ENCODE measurements at regions of chr10 and their contacts with region 1.

Region 1: DNA sequence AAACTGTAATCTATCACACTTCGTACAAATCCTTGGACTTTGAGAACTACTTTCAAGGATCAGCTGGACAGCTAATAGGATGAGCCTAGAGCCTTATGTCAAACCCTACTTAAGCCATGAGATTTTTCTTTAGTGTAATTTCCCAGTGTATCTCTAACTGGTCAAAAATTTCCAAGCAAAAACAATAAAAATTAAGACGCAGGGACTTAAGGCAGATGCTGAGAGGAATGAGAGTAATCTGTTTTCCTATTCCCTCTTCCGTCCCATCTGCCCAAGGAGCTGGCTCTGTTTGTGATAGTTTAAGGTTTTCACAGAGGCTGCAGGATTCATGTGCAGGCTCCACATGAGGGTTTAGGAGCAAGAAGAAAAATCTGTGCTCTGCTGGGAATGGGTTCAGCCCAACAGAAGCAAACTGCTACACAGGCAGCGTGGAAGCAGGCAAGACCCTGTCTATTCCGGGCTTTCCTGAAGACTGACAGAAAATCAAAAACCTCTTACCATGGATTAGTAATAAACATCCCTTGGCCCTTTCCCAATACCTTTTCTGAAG is 62.2 kb downstream of the ARMH3 start:
- DNase-seq: no peak
- H3K4me3 ChIP-seq: no peak overlapping the region
- H3K27ac ChIP-seq: no peak overlapping the region
- H3K4me1 ChIP-seq: no peaks in the 10 kb centered on the region
- H3K27me3 ChIP-seq: no peaks in the 10 kb centered on the region
- CTCF ChIP-seq: no peak
- POLR2A ChIP-seq: no peak

Region 2: GRCh38 chr10:101932183-101932582 is 61.5 kb before region 1 on chr10:
- intact Hi-C with region 1: loop called (anchors 2 kb)
- DNase-seq: no peak
- H3K4me3 ChIP-seq: no peak overlapping the region
- H3K27ac ChIP-seq: no peak overlapping the region
- H3K4me1 ChIP-seq: no peaks in the 10 kb centered on the region
- H3K27me3 ChIP-seq: no peaks in the 10 kb centered on the region
- CTCF ChIP-seq: no peak
- POLR2A ChIP-seq: no peak

Region 3: GRCh38 chr10:102120142-102120990 is 126.6 kb after region 1 on chr10 and contains the start of gene LDB1:
- intact Hi-C with region 1: no loop called
- DNase-seq: peak; percentile 70 to 76
- H3K4me3 ChIP-seq: peak within 1 kb of the TSS; percentile 80 to 96 (median 87)
- H3K27ac ChIP-seq: peak within 1 kb of the TSS; percentile 98 to 100
- H3K4me1 ChIP-seq: peaks cover 19 to 37% of the 10 kb centered on the region in 2 donors
- H3K27me3 ChIP-seq: no peaks in the 10 kb centered on the region
- CTCF ChIP-seq: no peak
- POLR2A ChIP-seq: peak; percentile 92
- total RNA-seq, gene LDB1: 29.6 to 53.6 (median 43.6) TPM

Region 4: DNA sequence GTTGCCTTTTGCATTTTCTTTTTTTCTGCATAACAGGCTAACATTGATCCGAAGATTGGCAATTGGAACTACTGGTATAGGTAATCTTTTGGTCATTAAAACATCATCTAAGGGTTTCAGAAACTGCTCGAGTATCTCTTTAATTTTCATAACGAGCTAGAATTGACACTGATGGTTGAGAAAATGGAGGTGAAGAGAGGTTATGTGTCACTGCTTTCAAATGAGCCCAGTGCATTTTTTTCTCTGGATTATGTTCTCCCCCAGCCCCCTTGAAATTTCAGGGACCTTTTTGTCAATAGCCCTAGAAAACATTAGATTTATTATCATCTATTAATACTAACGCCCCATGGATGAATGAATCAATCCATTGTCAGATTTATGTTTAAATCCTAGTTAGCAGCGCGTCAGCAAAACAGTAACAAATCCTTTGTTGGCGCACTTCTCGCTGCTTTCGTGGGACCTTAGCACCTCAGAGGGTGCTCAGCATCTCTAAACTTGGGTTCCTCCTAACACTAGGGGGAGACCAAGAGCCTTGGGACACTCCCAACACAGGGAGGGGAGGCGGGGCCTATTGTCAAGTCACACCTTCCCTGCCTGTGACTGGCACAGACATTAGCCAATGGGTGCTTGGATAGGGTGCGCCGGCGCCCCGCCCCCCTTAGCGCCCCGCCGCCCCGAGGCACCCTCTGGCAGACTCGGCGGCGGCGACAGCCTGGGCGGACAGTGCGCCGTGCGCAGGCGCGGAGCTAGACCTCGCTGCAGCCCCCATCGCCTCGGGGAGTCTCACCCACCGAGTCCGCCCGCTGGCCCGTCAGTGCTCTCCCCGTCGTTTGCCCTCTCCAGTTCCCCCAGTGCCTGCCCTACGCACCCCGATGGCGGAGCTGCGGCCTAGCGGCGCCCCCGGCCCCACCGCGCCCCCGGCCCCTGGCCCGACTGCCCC is 509.8 kb after region 1 on chr10 and contains the start of gene SUFU:
- intact Hi-C with region 1: no loop called
- DNase-seq: peak; percentile 96 to 98
- H3K4me3 ChIP-seq: peak within 1 kb of the TSS; percentile 98
- H3K27ac ChIP-seq: peak within 1 kb of the TSS; percentile 82 to 90
- H3K4me1 ChIP-seq: peaks cover 3 to 18% of the 10 kb centered on the region in 2 donors
- H3K27me3 ChIP-seq: no peaks in the 10 kb centered on the region
- CTCF ChIP-seq: peak; percentile 85 to 88 (median 87)
- POLR2A ChIP-seq: no peak
- total RNA-seq, gene SUFU: 6.2 to 9.1 (median 8.6) TPM

Region 5: GRCh38 chr10:102704915-102705314 is 711.2 kb after region 1 on chr10:
- intact Hi-C with region 1: loop called (anchors 5 kb)
- DNase-seq: no peak
- H3K4me3 ChIP-seq: no peak overlapping the region
- H3K27ac ChIP-seq: no peak overlapping the region
- H3K4me1 ChIP-seq: no peaks in the 10 kb centered on the region
- H3K27me3 ChIP-seq: no peaks in the 10 kb centered on the region
- CTCF ChIP-seq: no peak
- POLR2A ChIP-seq: no peak